HEK293 (cell line): ENCODE measurements at regions of chr9 and their contacts with region 1.

Region 1: DNA sequence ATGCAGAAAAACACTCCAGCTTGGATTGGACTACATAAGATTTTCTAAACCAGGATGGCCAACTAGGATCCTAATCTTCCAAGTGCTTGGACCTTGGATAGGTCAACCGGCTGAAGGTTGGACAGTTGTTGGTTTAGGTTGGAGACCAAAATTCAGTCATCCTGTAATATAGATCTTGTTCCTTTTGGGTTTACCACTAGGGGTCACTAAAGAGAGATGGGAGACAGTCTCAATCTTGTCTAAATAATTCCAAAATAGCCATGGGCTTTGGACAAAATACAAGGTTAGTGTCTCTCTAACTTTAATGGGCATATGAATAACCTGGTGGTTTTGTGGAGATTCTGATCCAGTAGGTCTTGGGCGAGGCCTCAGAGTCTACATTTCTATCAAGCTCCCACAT is 148.7 kb upstream of the ERCC6L2 start:
- H3K4me3 ChIP-seq: no peak overlapping the region
- H3K27ac ChIP-seq: no peak overlapping the region; the same call in 1 of the 2 replicates
- H3K4me1 ChIP-seq: peaks cover 7% of the 10 kb centered on the region
- CTCF ChIP-seq: peak; percentile 17; the same call in 1 of the 2 replicates

Region 2: GRCh38 chr9:95678759-95679158 is 48.0 kb before region 1 on chr9:
- CTCF ChIA-PET with region 1: no interaction called
- POLR2A ChIA-PET with region 1: no interaction called
- H3K4me3 ChIP-seq: no peak overlapping the region
- H3K27ac ChIP-seq: no peak overlapping the region
- H3K4me1 ChIP-seq: no peaks in the 10 kb centered on the region
- CTCF ChIP-seq: no peak

Region 3: GRCh38 chr9:95696701-95697100 is 30.1 kb before region 1 on chr9:
- CTCF ChIA-PET with region 1: no interaction called
- POLR2A ChIA-PET with region 1: no interaction called
- H3K4me3 ChIP-seq: no peak overlapping the region
- H3K27ac ChIP-seq: no peak overlapping the region
- H3K4me1 ChIP-seq: no peaks in the 10 kb centered on the region
- CTCF ChIP-seq: no peak

Region 4: GRCh38 chr9:95715868-95716435 is 10.8 kb before region 1 on chr9:
- CTCF ChIA-PET with region 1: interaction called, 12 read pairs
- POLR2A ChIA-PET with region 1: interaction called, 6 read pairs
- H3K4me3 ChIP-seq: no peak overlapping the region
- H3K27ac ChIP-seq: no peak overlapping the region
- H3K4me1 ChIP-seq: peaks cover 4% of the 10 kb centered on the region; the same call in 1 of the 2 replicates
- CTCF ChIP-seq: no peak

Region 5: GRCh38 chr9:95808011-95808410 is 81.3 kb after region 1 on chr9:
- CTCF ChIA-PET with region 1: no interaction called
- POLR2A ChIA-PET with region 1: no interaction called
- H3K4me3 ChIP-seq: no peak overlapping the region
- H3K27ac ChIP-seq: no peak overlapping the region
- H3K4me1 ChIP-seq: peaks cover 13% of the 10 kb centered on the region
- CTCF ChIP-seq: no peak

Region 6: DNA sequence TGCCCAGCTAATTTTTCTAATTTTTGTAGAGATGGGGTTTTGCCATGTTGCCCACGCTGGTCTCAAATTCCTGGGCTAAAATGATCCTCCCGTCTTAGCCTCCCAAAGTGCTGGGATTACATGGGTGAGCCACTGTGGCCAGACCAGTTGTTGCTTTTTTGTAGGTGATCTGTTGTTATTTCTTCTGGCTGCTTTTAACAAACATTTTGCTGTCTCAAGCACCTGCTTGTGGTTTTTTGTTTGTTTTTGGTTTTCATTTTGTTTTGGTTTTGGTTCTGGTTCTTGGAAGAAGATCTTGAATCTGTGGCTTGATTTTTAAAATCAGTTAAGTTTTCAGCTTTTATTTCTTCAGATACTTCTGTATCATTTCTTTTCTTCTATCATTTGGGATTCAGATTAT is 169.8 kb after region 1 on chr9:
- CTCF ChIA-PET with region 1: no interaction called
- POLR2A ChIA-PET with region 1: no interaction called
- H3K4me3 ChIP-seq: no peak overlapping the region
- H3K27ac ChIP-seq: no peak overlapping the region
- H3K4me1 ChIP-seq: no peaks in the 10 kb centered on the region; the same call in 1 of the 2 replicates
- CTCF ChIP-seq: no peak